A549 (cell line): ENCODE measurements at regions of chr15 and their contacts with region 1.

Region 1: GRCh38 chr15:41989259-41989933 is 17.0 kb upstream of the EHD4 start:
- DNase-seq: peak; percentile 66 to 73
- ATAC-seq: peak; percentile 92 to 98
- H3K4me3 ChIP-seq: no peak overlapping the region
- H3K27ac ChIP-seq: peak overlapping the region; percentile 24 to 65; a peak in 3 of 6 replicates
- H3K4me1 ChIP-seq: no peaks in the 10 kb centered on the region
- CTCF ChIP-seq: peak; percentile 74
- EP300 ChIP-seq: no peak
- POLR2A ChIP-seq: no peak
- RAD21 ChIP-seq: peak; percentile 93 to 95

Region 2: DNA sequence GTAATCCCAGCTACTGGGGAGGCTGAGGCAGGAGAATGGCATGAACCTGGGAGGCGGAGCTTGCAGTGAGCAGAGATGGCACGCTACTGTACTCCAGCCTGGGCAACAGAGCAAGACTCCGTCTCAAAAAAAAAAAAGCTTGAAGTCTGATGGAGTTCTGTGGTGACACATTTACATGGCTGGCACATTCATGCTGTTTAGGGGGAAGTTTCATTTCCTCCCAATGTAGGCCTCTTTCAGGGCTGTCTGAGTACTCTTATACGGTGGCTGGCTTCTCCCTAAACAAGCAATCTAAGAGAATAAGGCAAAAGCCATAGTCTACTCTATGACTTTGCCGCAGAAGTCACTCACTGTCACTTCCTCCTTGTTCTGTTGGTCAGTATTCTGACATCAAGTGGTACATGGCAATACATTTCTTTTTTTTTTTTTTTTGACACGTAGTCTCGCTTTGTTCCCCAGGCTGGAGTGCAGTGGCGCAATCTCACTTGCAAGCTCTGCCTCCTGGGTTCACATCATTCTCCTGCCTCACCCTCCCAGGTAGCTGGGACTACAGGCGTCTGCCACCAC is 698.2 kb before region 1 on chr15:
- CTCF ChIA-PET with region 1: no interaction called
- POLR2A ChIA-PET with region 1: no interaction called
- DNase-seq: no peak
- ATAC-seq: peak; percentile 35 to 39; a peak in 1 of 6 replicates
- H3K4me3 ChIP-seq: no peak overlapping the region
- H3K27ac ChIP-seq: no peak overlapping the region; a peak in 1 of 6 replicates
- H3K4me1 ChIP-seq: peaks cover 22% of the 10 kb centered on the region; the same call in 2 of the 3 replicates
- CTCF ChIP-seq: no peak
- EP300 ChIP-seq: no peak
- POLR2A ChIP-seq: no peak
- RAD21 ChIP-seq: no peak

Region 3: DNA sequence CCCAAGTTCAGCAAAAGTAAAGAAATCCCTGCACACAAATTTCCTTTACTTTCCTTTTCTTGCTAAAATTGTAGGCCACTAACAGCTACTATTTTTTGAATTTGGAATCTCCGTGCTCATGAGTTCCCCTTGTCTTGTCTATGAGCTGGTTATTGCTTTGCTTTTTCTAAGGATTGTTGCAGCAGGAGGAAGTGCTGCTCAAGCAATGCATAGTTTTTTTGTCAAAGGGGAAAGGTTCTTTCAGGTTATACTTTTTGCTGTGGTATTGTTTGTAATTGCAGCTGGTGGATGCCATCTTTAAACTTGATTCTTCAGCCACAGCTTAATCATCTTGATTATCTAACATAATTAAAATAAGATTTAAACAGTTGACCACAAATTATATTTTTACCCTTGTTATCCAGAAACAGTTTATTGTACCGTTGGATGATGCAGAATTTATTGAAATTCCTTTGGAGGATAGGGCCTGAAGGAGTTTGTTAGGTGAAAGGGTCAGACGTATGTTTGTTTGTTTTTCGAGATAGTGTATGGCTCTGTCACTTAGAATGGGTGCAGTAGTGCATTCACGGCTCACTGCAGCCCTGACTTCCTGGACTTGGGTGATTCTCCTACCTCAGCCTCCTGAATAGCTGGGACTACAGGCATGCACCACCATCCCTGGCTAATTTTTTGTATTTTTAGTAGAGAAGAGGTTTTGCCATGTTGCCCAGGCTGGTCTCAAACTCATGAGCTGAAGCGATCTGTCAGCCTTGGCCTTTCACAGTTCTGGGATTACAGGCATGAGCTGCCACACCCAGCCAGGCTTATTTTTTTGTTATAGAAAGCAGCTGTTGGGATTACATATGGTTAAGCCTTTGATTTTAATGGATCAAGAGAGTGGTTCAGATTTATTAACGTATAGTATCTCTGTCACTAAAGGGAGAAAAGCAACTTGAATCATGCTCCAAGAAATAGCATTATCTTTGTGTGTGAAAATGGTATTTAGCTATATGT is 317.4 kb before region 1 on chr15:
- CTCF ChIA-PET with region 1: no interaction called
- POLR2A ChIA-PET with region 1: no interaction called
- DNase-seq: no peak
- ATAC-seq: no peak
- H3K4me3 ChIP-seq: no peak overlapping the region
- H3K27ac ChIP-seq: no peak overlapping the region
- H3K4me1 ChIP-seq: peaks cover 6% of the 10 kb centered on the region; the same call in 2 of the 3 replicates
- CTCF ChIP-seq: no peak
- EP300 ChIP-seq: no peak
- POLR2A ChIP-seq: no peak
- RAD21 ChIP-seq: no peak

Region 4: GRCh38 chr15:41972253-41973242 is 16.8 kb before region 1 on chr15 and contains the start of gene EHD4:
- CTCF ChIA-PET with region 1: interaction called, 41 read pairs
- POLR2A ChIA-PET with region 1: interaction called, 3 read pairs
- DNase-seq: peak; percentile 95 to 98
- ATAC-seq: peak; percentile 96 to 97
- H3K4me3 ChIP-seq: peak within 1 kb of the TSS; percentile 60
- H3K27ac ChIP-seq: peak within 1 kb of the TSS; percentile 82 to 95
- H3K4me1 ChIP-seq: peaks cover 13% of the 10 kb centered on the region; the same call in 1 of the 3 replicates
- CTCF ChIP-seq: peak; percentile 22; the same call in 1 of the 3 replicates
- EP300 ChIP-seq: no peak
- POLR2A ChIP-seq: peak; percentile 68
- RAD21 ChIP-seq: peak; percentile 24 to 35
- polyA plus RNA-seq, gene EHD4: 9.0 and 9.3 TPM in 2 replicates

Region 5: GRCh38 chr15:42018306-42019224 is 29.2 kb after region 1 on chr15:
- CTCF ChIA-PET with region 1: interaction called, 15 read pairs
- POLR2A ChIA-PET with region 1: no interaction called
- DNase-seq: no peak
- ATAC-seq: no peak
- H3K4me3 ChIP-seq: no peak overlapping the region
- H3K27ac ChIP-seq: no peak overlapping the region
- H3K4me1 ChIP-seq: no peaks in the 10 kb centered on the region
- CTCF ChIP-seq: no peak
- EP300 ChIP-seq: no peak
- POLR2A ChIP-seq: no peak
- RAD21 ChIP-seq: no peak

Region 6: DNA sequence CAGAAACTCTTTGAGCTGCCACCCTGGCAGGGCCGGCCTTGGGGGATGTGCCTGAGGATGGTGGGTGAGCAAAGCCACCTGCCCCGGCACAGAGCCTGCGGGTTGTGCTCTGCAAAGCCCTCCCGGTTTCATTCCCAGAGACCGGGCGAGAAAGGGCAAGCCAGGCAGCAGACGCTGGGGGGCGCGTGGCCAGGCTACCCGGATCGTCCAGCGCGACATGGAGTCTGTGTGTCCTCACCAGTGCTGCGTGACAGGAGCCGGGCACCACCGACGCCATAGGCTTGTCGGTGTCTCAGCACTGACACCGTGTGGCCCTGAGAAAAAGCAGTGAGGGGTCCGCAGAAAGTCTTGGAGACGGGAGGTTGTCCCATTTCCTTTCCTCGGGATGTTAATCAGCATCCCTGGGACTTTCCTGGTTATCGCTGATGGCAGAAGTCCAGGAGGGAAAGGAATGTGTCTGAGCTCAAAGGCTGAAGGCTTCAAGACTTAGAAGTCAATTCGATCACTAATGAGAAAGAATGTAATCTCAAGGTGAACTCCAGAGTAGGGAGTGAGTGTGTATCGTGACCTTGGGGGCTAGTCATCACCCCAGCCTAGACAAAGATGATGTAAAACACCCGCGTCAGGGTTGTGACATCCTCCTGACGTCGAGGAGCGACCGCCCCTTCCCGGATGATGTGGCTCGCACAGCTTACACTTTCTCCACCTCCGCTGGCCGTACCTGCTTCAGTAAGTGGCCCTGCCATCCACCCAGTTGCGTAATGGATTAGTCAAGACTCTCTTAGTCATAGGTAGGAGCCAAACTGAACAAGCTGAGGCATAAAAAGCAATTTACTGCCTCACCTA is 67.8 kb after region 1 on chr15:
- CTCF ChIA-PET with region 1: interaction called, 96 read pairs
- POLR2A ChIA-PET with region 1: interaction called, 4 read pairs
- DNase-seq: peak; percentile 88 to 94
- ATAC-seq: peak; percentile 94 to 96
- H3K4me3 ChIP-seq: peak overlapping the region; percentile 39
- H3K27ac ChIP-seq: peak overlapping the region; percentile 70 to 85
- H3K4me1 ChIP-seq: peaks cover 10% of the 10 kb centered on the region; the same call in 2 of the 3 replicates
- CTCF ChIP-seq: peak; percentile 60
- EP300 ChIP-seq: peak; percentile 20 to 44; a peak in 2 of 5 replicates
- POLR2A ChIP-seq: no peak
- RAD21 ChIP-seq: peak; percentile 54 to 69

Region 7: GRCh38 chr15:42094512-42094963 is 105.1 kb after region 1 on chr15 and contains the start of gene PLA2G4D:
- CTCF ChIA-PET with region 1: interaction called, 247 read pairs
- POLR2A ChIA-PET with region 1: no interaction called
- DNase-seq: no peak
- ATAC-seq: no peak
- H3K4me3 ChIP-seq: no peak within 1 kb of the TSS
- H3K27ac ChIP-seq: no peak within 1 kb of the TSS
- H3K4me1 ChIP-seq: no peaks in the 10 kb centered on the region
- CTCF ChIP-seq: no peak
- EP300 ChIP-seq: no peak
- POLR2A ChIP-seq: no peak
- RAD21 ChIP-seq: no peak
- polyA plus RNA-seq, gene PLA2G4D: not detected in 2 replicates